ENCODE measurements at regions of chr15 and their contacts with region 1.

Region 1: GRCh38 chr15:64478863-64479262 is 18.5 kb downstream of the ZNF609 start:
- DNase-seq: no peak
- ATAC-seq: no peak
- H3K4me3 ChIP-seq: no peak overlapping the region
- H3K27ac ChIP-seq: no peak overlapping the region
- H3K4me1 ChIP-seq: no peaks in the 10 kb centered on the region; a peak in 1 of 5 replicates
- H3K27me3 ChIP-seq: no peaks in the 10 kb centered on the region
- CTCF ChIP-seq: no peak
- EP300 ChIP-seq: no peak
- POLR2A ChIP-seq: no peak
- RAD21 ChIP-seq: no peak

Region 2: DNA sequence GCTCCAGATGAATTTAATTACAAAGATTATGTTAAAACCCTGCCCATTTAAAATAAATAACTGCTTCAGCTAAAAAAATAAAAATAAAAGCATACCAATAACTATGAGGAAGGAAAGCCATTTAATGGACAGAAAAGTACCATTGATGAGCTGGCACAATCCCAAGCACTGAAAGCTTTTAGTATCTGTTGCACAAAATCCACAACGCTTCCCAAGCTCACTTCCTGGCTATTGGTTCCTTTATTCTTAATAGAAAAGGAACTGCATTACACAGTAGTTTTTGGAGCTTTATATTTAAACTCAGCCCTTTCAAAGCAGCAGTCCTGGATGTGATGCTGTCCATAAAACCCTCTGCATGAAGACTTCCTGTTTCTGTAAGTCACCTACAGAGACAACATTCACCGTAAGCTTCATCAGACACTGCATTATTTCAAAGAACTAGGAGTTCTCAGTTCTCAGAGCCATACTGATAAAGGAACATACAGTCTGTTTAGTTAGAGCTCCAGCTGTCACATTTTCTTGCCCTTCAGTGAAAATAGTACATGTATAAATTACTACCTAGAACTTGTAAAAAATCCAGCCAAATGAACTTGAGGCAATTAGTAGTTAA is 204.4 kb before region 1 on chr15:
- CTCF ChIA-PET with region 1: no interaction called
- POLR2A ChIA-PET with region 1: no interaction called
- in situ Hi-C with region 1: no loop called
- intact Hi-C with region 1: no loop called
- DNase-seq: no peak
- ATAC-seq: no peak
- H3K4me3 ChIP-seq: no peak overlapping the region
- H3K27ac ChIP-seq: no peak overlapping the region
- H3K4me1 ChIP-seq: no peaks in the 10 kb centered on the region
- H3K27me3 ChIP-seq: no peaks in the 10 kb centered on the region
- CTCF ChIP-seq: no peak
- EP300 ChIP-seq: no peak
- POLR2A ChIP-seq: no peak
- RAD21 ChIP-seq: no peak

Region 3: DNA sequence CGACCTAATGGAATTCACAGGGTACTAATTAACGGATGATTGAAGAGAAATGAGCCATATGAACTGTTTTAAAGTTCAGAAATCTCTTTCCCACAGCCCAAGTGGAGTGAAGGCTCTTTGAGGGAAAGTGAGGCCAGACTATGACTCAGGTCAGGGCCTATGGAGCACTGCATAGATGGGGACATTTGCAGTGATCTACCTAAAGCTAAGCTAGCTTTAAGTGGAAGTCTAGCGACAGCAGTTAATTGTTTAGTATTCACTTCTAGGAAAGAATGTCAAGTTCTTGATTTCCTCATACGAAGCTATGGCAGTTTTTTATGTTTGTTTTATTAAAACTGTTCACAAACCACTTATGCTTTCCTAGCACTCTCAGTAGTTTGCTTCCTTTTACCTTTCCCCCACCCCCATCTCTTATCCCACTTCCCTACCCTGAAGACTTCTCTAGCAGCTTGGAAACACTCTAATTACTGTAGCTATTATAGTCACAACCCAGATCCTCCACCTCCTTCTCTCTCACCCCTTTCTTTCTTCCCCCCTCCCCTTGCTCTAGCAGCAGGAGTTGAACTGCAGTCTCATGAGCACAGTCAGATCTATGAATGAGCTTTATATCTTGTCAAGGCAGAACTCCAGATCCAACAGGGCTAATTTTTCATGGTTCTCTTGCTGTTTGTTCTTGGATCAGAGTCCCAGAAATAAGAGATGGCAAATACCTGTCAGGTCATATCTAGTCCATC is 12.3 kb before region 1 on chr15:
- CTCF ChIA-PET with region 1: no interaction called
- POLR2A ChIA-PET with region 1: interaction called, 38 read pairs
- in situ Hi-C with region 1: no loop called
- intact Hi-C with region 1: no loop called
- DNase-seq: peak in 1 of 4 experiments; percentile 26
- ATAC-seq: peak; percentile 34
- H3K4me3 ChIP-seq: no peak overlapping the region
- H3K27ac ChIP-seq: peak overlapping the region; percentile 22; the same call in 2 of the 3 replicates
- H3K4me1 ChIP-seq: peaks cover 13 to 37% of the 10 kb centered on the region in 2 experiments; a peak in 4 of 5 replicates
- H3K27me3 ChIP-seq: no peaks in the 10 kb centered on the region
- CTCF ChIP-seq: no peak
- EP300 ChIP-seq: no peak
- POLR2A ChIP-seq: no peak
- RAD21 ChIP-seq: no peak

Region 4: DNA sequence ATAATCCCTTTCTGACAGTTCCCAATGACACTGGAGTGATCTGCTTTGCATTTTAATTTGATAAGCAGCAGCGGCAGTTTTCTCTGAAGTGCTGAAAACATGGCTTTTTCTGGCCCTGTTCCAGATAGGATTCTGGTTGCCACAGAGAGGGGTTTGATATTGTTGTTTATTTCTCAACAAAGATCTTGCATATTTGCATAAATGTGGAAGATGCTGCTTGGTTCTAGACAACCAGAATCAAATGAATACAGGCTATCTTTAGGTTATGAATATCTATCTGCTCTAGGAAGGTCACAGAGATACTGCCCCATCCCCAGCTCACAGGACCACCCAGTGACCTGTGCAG is 118.6 kb after region 1 on chr15:
- CTCF ChIA-PET with region 1: no interaction called
- POLR2A ChIA-PET with region 1: no interaction called
- in situ Hi-C with region 1: no loop called
- intact Hi-C with region 1: no loop called
- DNase-seq: no peak
- ATAC-seq: no peak
- H3K4me3 ChIP-seq: no peak overlapping the region
- H3K27ac ChIP-seq: no peak overlapping the region
- H3K4me1 ChIP-seq: peaks cover 0 to 14% of the 10 kb centered on the region in 2 experiments; a peak in 3 of 5 replicates
- H3K27me3 ChIP-seq: no peaks in the 10 kb centered on the region
- CTCF ChIP-seq: no peak
- EP300 ChIP-seq: no peak
- POLR2A ChIP-seq: no peak
- RAD21 ChIP-seq: no peak